A673 (cell line): ENCODE measurements at regions of chr12 and their contacts with region 1.

Region 1: GRCh38 chr12:84738481-84738972 is 174.1 kb downstream of the SLC6A15 start:
- DNase-seq: no peak
- H3K4me3 ChIP-seq: no peak overlapping the region
- H3K27ac ChIP-seq: no peak overlapping the region
- H3K4me1 ChIP-seq: no peaks in the 10 kb centered on the region
- H3K27me3 ChIP-seq: no peaks in the 10 kb centered on the region
- CTCF ChIP-seq: no peak

Region 2: GRCh38 chr12:83865431-83865830 is 873.1 kb before region 1 on chr12:
- CTCF ChIA-PET with region 1: no interaction called
- POLR2A ChIA-PET with region 1: interaction called, 10 read pairs
- intact Hi-C with region 1: no loop called
- DNase-seq: no peak
- H3K4me3 ChIP-seq: no peak overlapping the region
- H3K27ac ChIP-seq: no peak overlapping the region
- H3K4me1 ChIP-seq: no peaks in the 10 kb centered on the region
- H3K27me3 ChIP-seq: no peaks in the 10 kb centered on the region
- CTCF ChIP-seq: no peak